Transverse colon (tissue), 4 donors: ENCODE measurements at regions of chr19 and their contacts with region 1.

Region 1: DNA sequence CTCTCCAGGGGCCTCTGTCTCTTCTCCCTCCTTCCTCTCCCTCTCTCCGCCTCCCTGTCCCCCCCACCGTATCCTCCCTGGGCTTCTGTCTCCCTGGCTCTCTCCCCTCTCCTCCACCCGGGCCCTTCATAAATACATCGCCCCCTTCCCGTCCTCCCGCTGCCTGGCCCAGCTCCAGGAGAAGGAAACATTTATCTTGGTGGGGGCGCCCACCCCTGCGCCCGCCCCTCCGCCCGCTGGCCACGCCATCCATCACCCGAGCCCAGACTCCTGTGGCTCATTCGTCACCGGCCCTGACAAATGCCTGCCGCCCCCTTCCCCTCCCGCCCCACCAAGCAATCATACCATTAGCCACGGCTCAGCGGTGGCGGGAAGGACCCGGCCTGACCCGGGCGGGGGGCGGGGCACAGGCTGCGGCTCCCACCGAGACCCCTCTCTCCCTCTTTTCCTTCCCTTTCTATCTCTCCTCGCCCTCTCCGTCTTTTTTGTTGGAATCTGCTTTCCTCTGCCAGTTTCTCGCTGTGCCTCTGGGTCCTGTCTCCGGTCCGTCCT is 2.6 kb upstream of the MEIS3 start:
- DNase-seq: no peak
- H3K4me3 ChIP-seq: no peak overlapping the region
- H3K27ac ChIP-seq: no peak overlapping the region
- H3K4me1 ChIP-seq: peaks cover 0 to 4% (median 1%) of the 10 kb centered on the region in 4 donors
- H3K27me3 ChIP-seq: peaks cover 98% of the 10 kb centered on the region
- CTCF ChIP-seq: no peak
- EP300 ChIP-seq: no peak
- POLR2A ChIP-seq: no peak

Region 2: DNA sequence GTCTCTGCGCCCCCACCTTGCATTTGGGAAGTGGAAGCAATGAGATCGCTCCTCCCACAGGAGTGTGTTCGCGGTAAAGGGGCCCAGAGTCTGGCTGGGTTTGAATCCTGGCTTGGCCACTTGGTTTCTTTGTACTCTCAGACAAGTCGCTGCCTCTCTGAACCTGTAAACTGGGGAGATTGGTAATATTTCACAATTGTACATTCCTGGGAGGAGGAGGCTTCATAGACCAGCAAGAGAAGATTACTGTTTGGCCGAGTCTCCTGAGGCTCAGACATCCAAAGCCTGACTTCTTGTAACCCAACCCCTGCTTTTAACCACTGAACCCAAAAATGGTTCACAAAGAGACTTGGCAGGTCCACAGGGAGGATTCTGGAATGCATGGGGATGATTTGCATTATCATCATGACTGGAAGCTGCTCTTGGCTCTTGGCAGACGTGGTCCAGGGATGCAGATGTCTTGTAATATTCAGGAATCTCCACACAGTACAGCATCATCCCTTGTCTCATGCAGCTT is 662.0 kb before region 1 on chr19:
- in situ Hi-C with region 1: no loop called
- intact Hi-C with region 1: loop called (anchors 5 kb)
- DNase-seq: no peak
- H3K4me3 ChIP-seq: no peak overlapping the region
- H3K27ac ChIP-seq: peak overlapping the region; percentile 44 to 55 (median 48)
- H3K4me1 ChIP-seq: peaks cover 4 to 22% (median 13%) of the 10 kb centered on the region in 4 donors
- H3K27me3 ChIP-seq: no peaks in the 10 kb centered on the region
- CTCF ChIP-seq: no peak
- EP300 ChIP-seq: no peak
- POLR2A ChIP-seq: no peak

Region 3: DNA sequence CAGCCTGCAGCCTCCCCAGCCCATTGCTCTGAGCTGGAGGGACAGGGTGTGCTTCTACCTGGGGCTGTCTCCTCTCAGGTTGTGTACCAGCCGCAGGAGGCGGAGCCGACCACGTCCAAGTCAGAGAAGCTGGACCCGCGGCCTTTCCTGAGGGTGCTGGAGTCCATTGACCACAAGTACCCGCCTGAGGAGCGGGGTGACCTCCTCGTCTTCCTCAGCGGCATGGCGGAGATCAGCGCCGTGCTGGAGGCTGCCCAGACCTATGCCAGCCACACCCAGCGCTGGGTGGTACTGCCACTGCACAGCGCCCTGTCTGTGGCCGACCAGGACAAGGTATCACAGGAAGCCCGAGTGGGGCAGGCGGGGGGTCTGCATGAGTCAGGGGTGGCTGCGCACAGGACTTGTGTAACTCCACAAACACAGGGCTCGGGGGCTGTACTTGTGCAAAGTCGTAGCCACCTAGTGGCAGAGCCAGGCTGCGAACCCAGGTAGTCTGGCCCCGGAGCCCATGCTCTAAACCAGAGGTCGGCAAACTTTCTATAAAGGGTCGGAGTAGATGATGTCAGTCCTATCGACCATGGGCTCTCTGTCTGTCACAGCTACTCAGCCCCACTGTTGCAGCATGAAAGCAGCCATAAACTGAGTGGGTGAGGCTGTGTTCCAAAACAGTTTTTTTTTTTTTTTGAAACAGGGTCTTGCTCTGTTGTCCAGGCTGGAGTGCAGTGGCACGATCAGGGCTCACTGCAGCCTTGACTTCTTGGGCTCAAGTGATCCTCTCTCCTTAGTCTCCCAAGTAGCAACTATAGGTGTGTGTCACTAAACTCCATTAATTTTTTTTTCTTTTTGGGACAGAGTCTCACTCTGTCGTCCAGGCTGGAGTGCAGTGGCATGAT is 63.9 kb before region 1 on chr19:
- in situ Hi-C with region 1: no loop called
- intact Hi-C with region 1: loop called (anchors 2 kb)
- DNase-seq: no peak
- H3K4me3 ChIP-seq: no peak overlapping the region
- H3K27ac ChIP-seq: no peak overlapping the region
- H3K4me1 ChIP-seq: no peaks in the 10 kb centered on the region
- H3K27me3 ChIP-seq: no peaks in the 10 kb centered on the region
- CTCF ChIP-seq: no peak
- EP300 ChIP-seq: no peak
- POLR2A ChIP-seq: no peak

Region 4: GRCh38 chr19:49148784-49149651 is 1727.1 kb after region 1 on chr19:
- in situ Hi-C with region 1: no loop called
- intact Hi-C with region 1: no loop called
- DNase-seq: peak; percentile 100
- H3K4me3 ChIP-seq: peak overlapping the region; percentile 54 to 78 (median 64)
- H3K27ac ChIP-seq: peak overlapping the region; percentile 83 to 94 (median 92)
- H3K4me1 ChIP-seq: peaks cover 17 to 52% (median 35%) of the 10 kb centered on the region in 4 donors
- H3K27me3 ChIP-seq: no peaks in the 10 kb centered on the region
- CTCF ChIP-seq: no peak
- EP300 ChIP-seq: no peak
- POLR2A ChIP-seq: peak; percentile 87